Endothelial cell of umbilical vein (primary cell): ENCODE measurements at regions of chr12 and their contacts with region 1.

Region 1: GRCh38 chr12:15522565-15523187 is 200.4 kb downstream of the PTPRO start:
- DNase-seq: peak; percentile 54
- H3K4me3 ChIP-seq: no peak overlapping the region
- H3K27ac ChIP-seq: no peak overlapping the region
- H3K4me1 ChIP-seq: no peaks in the 10 kb centered on the region
- H3K27me3 ChIP-seq: peaks cover 6 to 24% of the 10 kb centered on the region in 2 experiments
- CTCF ChIP-seq: peak; percentile 22 to 27
- POLR2A ChIP-seq: no peak

Region 2: GRCh38 chr12:14723763-14724162 is 798.9 kb before region 1 on chr12:
- CTCF ChIA-PET with region 1: interaction called, 4 read pairs
- POLR2A ChIA-PET with region 1: no interaction called
- dilution Hi-C with region 1: no loop called
- intact Hi-C with region 1: loop called (anchors 10 kb)
- DNase-seq: peak; percentile 56
- H3K4me3 ChIP-seq: no peak overlapping the region
- H3K27ac ChIP-seq: no peak overlapping the region
- H3K4me1 ChIP-seq: no peaks in the 10 kb centered on the region
- H3K27me3 ChIP-seq: peaks cover 0 to 2% of the 10 kb centered on the region in 2 experiments
- CTCF ChIP-seq: peak; percentile 57 to 75
- POLR2A ChIP-seq: no peak

Region 3: DNA sequence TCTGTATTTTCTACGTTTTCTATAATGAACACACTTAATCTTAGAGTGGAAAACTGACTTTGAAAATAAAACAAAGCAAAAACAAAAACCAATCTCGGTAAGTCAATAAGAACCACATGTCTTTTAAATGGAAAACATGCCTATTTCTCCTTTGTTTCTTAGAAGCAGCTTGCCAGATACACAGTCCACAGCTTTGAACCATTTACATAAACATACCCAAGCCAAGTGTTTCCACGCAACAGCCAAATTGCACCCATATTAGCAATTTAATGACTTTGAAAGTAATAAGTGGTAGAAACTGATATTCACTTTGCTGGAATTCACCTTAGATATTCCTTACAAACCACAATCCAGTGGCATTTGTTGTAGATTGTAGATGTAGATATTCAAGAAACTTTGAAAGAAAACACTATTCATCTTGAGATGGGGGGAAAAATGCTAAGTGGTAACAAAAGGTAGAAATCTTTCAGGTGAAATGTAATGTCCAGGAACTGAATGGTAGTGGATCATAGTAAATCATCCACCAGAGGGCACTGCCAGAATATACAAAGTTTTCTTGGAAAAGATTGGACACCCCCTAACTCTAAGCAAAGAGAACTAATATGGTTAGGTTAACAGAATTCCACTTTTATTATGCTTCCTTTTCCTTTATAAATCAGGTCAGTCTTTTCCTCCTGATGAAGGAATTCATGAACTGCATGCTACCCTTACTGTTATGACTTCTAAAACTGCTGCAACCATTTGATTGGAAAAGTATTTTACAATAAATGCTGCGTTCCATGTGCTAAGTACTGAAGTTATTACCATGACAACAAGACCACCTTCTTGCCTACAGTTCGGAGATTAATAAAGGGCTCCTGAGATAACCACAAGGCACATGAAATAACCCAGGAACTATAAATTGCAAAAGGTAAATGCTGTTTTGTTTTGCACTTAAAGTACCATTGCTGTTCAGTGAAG is 371.2 kb before region 1 on chr12:
- CTCF ChIA-PET with region 1: interaction called, 4 read pairs
- POLR2A ChIA-PET with region 1: no interaction called
- dilution Hi-C with region 1: no loop called
- intact Hi-C with region 1: loop called (anchors 5 kb)
- DNase-seq: peak; percentile 50
- H3K4me3 ChIP-seq: no peak overlapping the region
- H3K27ac ChIP-seq: no peak overlapping the region
- H3K4me1 ChIP-seq: no peaks in the 10 kb centered on the region
- H3K27me3 ChIP-seq: peaks cover 0 to 2% of the 10 kb centered on the region in 2 experiments
- CTCF ChIP-seq: peak; percentile 9 to 40
- POLR2A ChIP-seq: no peak

Region 4: DNA sequence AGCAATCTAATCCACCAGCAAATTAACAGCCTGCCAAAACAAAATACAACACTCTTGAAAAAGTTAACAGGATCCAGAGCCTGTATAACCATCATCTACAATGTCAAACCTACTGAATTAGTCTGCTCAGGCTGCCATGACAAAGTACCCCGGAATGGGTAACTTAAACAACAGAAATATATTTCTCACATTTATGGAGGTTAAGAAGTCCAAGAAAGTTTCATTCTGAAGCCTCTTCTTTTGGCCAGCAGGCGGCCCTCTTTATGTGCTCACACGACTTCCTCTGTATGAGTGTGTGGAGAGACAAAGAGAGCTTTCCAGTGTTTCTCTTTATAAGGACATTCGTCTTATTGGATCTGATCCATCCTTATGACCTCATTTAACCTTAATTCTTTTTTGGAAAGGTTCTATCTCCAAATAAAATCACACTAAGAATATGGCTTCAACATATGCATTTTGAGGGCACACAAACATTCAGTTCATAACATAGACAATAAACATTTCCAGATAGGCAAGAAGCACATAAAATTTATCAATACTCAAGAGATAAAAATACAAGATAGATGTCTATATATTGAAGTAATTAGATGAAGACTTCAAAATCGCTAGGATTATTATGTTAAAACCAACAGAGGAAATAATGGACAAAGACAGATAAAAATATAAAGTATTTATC is 295.5 kb before region 1 on chr12:
- CTCF ChIA-PET with region 1: interaction called, 30 read pairs
- POLR2A ChIA-PET with region 1: no interaction called
- dilution Hi-C with region 1: no loop called
- intact Hi-C with region 1: loop called (anchors 1 kb)
- DNase-seq: peak; percentile 55
- H3K4me3 ChIP-seq: no peak overlapping the region
- H3K27ac ChIP-seq: no peak overlapping the region
- H3K4me1 ChIP-seq: no peaks in the 10 kb centered on the region
- H3K27me3 ChIP-seq: peaks cover 7 to 23% of the 10 kb centered on the region in 2 experiments
- CTCF ChIP-seq: peak; percentile 56 to 67
- POLR2A ChIP-seq: no peak

Region 5: GRCh38 chr12:15276088-15276698 is 246.5 kb before region 1 on chr12:
- CTCF ChIA-PET with region 1: interaction called, 46 read pairs
- POLR2A ChIA-PET with region 1: no interaction called
- dilution Hi-C with region 1: no loop called
- intact Hi-C with region 1: loop called (anchors 1 kb)
- DNase-seq: peak; percentile 52
- H3K4me3 ChIP-seq: no peak overlapping the region
- H3K27ac ChIP-seq: no peak overlapping the region
- H3K4me1 ChIP-seq: no peaks in the 10 kb centered on the region
- H3K27me3 ChIP-seq: peaks cover 0 to 1% of the 10 kb centered on the region in 2 experiments
- CTCF ChIP-seq: peak; percentile 58 to 59
- POLR2A ChIP-seq: no peak

Region 6: GRCh38 chr12:15505616-15506015 is 17.1 kb before region 1 on chr12:
- CTCF ChIA-PET with region 1: no interaction called
- POLR2A ChIA-PET with region 1: interaction called, 10 read pairs
- dilution Hi-C with region 1: no loop called
- intact Hi-C with region 1: no loop called
- DNase-seq: no peak
- H3K4me3 ChIP-seq: no peak overlapping the region
- H3K27ac ChIP-seq: no peak overlapping the region
- H3K4me1 ChIP-seq: no peaks in the 10 kb centered on the region
- H3K27me3 ChIP-seq: peaks cover 2 to 4% of the 10 kb centered on the region in 2 experiments
- CTCF ChIP-seq: no peak
- POLR2A ChIP-seq: no peak

Region 7: GRCh38 chr12:15629108-15629507 is 106.4 kb after region 1 on chr12:
- CTCF ChIA-PET with region 1: no interaction called
- POLR2A ChIA-PET with region 1: no interaction called
- dilution Hi-C with region 1: no loop called
- intact Hi-C with region 1: no loop called
- DNase-seq: peak; percentile 90
- H3K4me3 ChIP-seq: no peak overlapping the region
- H3K27ac ChIP-seq: peak overlapping the region; percentile 94
- H3K4me1 ChIP-seq: peaks cover 54% of the 10 kb centered on the region
- H3K27me3 ChIP-seq: no peaks in the 10 kb centered on the region
- CTCF ChIP-seq: no peak
- POLR2A ChIP-seq: no peak